HAP-1 (cell line): ENCODE measurements at regions of chr12 and their contacts with region 1.

Region 1: DNA sequence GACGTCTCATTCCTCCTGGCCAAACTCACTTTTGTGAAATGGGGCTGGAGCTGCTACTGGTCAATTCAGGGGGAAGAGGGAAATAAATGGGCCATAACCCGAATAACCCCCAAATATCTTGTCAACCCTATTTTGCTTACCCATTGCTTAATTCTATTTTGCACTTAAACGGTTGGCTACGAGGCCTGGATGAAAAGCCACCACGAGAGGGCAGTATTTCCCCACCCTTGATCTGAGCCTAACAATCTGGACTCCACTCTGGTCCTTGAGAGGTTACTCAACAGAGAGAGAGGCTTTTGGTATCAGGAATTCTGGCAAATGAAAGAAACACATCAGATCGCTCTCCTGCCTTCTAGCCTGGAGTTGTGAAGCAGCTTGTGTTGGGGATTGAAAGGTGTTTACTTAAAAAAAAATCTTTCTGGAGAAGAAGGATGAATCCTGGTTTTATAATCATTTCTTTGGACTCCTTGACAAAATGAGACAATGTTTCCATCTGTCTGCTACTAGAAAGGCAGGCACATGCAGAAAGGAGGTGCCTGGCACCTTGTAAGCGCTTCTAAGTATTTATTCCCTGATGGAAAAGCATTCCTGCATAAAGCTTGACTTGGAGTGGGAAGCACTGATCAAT is 22.4 kb upstream of the FBXO21 start:
- DNase-seq: peak; percentile 62 to 80
- H3K4me3 ChIP-seq: no peak overlapping the region
- H3K4me1 ChIP-seq: no peaks in the 10 kb centered on the region
- H3K27me3 ChIP-seq: peaks cover 20% of the 10 kb centered on the region

Region 2: GRCh38 chr12:116568203-116568602 is 644.5 kb before region 1 on chr12:
- in situ Hi-C with region 1: no loop called
- DNase-seq: no peak
- H3K4me3 ChIP-seq: no peak overlapping the region
- H3K4me1 ChIP-seq: peaks cover 7% of the 10 kb centered on the region; the same call in 1 of the 2 replicates
- H3K27me3 ChIP-seq: no peaks in the 10 kb centered on the region

Region 3: GRCh38 chr12:117486840-117487659 is 274.4 kb after region 1 on chr12:
- in situ Hi-C with region 1: no loop called
- DNase-seq: no peak
- H3K4me3 ChIP-seq: no peak overlapping the region
- H3K4me1 ChIP-seq: no peaks in the 10 kb centered on the region
- H3K27me3 ChIP-seq: no peaks in the 10 kb centered on the region

Region 4: GRCh38 chr12:117587631-117588287 is 375.1 kb after region 1 on chr12:
- in situ Hi-C with region 1: loop called (anchors 25 kb)
- DNase-seq: peak; percentile 40 to 74
- H3K4me3 ChIP-seq: no peak overlapping the region
- H3K4me1 ChIP-seq: no peaks in the 10 kb centered on the region
- H3K27me3 ChIP-seq: peaks cover 7% of the 10 kb centered on the region; the same call in 1 of the 2 replicates

Region 5: DNA sequence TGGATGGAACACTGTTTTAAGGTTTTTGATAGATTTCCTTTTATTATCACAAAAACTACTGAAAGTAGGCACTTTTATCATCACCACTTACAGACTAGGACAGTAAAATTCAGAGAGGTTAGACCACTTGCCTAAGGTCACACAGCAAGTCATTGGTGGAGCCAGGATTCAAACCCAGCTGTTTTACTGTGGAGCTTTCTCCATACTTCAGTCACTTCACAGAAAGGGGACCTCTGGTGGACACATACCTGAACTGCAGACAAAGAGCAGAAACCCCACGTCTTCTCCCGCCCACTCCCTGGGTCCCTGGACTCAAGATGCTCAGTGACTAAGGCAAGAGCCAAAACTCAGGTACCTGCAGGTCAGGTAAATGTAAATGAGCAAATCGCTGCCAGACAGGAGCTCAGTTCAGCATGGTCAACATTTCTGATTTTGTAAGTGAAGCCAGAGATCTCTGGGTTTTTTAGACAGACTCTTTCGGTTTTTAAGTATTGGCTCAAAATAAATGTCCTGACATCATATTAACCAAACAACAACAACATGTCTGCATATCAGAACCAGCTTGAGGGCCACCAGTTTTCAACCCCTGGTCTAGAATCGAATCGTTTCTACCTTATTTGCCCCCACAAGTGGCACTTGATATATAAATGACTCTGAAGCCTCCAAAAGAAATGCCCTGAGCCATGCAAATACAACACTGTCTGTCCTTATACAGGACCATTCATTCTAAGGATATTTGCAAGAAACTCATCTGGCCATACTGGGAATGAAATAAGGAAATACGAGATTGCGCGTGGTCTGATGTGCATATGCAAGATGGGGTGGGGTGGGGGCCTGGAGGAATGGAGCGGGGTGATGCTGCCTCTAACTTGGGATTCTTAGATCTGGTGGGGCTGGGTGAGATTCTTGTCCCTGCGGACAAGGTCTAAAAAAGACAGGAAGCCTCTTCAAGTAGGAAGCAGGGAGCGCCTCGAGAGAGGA is 645.2 kb after region 1 on chr12:
- in situ Hi-C with region 1: loop called (anchors 10 kb)
- DNase-seq: peak; percentile 36 to 67
- H3K4me3 ChIP-seq: no peak overlapping the region
- H3K4me1 ChIP-seq: no peaks in the 10 kb centered on the region
- H3K27me3 ChIP-seq: no peaks in the 10 kb centered on the region